ENCODE measurements at regions of chr1 and their contacts with region 1.

Region 1: DNA sequence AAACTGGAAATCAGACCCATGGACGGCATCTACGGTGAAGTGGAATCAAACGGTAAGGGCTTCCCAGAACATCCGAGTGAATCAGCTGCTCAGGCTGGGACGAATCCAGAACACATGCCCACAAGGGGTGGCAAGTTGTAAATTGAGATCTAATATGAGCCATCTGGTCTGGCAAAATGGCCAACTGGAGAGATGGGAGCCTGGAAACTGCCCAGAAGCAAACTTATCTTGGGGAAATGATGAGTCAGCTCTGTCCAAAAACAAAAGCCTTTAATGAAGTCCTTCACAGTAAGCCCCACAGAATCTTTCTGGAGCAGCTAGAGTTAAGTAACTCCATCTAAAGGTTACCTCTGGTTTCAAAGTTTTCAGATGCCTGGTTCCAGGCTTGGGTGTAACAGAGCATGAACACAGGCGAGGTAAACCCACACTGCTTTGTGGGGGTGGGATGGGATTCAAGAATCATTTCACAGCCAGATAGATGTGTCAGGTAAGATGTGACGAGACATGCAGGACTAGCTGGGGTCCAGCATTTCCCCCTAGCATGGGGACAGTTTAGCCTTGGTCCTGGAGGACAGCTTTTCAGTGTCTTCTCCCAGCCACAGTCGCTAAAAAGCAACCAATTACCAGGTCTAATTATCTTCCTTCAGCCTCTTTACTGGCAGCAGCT is 10.5 kb upstream of the SRP9 start:
- DNase-seq: peak; percentile 73
- ATAC-seq: peak; percentile 64 to 68

Region 2: GRCh38 chr1:225612287-225612686 is 154.8 kb before region 1 on chr1:
- intact Hi-C with region 1: no loop called
- DNase-seq: no peak
- ATAC-seq: no peak

Region 3: DNA sequence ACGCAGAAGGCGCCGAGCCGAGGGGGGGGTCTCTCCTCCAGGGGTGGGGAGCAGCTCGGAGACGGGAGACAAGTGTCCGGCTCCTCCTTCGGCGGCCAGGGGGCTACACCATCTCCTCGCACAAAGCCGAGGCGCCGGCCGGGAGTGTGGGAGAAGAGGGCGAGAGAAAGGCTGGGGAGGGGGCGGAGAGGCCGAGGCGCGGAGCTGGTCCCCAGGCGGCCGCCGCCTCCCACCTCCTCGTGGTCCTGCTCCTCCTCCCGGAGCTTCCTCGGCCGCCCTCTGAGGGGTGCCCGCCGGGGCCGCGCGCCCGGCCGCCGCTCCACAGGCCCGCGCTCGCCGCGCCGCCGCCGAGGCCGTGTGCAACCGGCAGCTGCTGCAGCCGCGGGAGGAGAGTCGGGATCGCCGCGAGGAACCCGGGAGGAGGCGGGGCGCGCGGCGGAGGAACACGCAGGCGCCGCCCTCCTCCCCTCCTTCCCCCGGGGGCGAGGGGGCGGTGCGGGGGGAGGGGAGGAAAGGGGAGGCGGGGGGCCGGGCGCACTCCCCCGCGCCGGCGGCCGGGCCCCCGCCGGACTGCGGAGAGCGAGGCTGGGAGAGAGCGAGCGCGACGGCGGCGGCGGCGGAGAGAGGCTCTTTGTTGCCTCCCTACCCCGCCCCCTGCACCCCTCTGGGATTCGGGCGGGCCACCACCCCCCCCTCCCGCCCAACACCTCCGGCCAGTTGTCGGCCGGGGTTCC is 114.2 kb before region 1 on chr1 and contains the start of gene ENAH:
- intact Hi-C with region 1: loop called in 1 of 2 experiments (anchors 5 kb)
- DNase-seq: peak; percentile 88
- ATAC-seq: peak; percentile 87 to 92
- total RNA-seq, gene ENAH: 73.4 to 79.0 TPM

Region 4: GRCh38 chr1:225694151-225694603 is 72.9 kb before region 1 on chr1:
- intact Hi-C with region 1: loop called in 1 of 2 experiments (anchors 5 kb)
- DNase-seq: peak; percentile 64
- ATAC-seq: peak; percentile 94 to 97

Region 5: GRCh38 chr1:225848030-225848955 is 81.2 kb after region 1 on chr1:
- intact Hi-C with region 1: no loop called
- DNase-seq: no peak
- ATAC-seq: peak in 1 of 2 donors; percentile 3

Measured in left cardiac atrium (tissue), 4 donors.